Right ventricle myocardium inferior (tissue), 1 donor: ENCODE measurements at regions of chr9 and their contacts with region 1.

Region 1: GRCh38 chr9:27414220-27414761 is 109.8 kb upstream of the IFNK start:
- DNase-seq: peak; percentile 61
- ATAC-seq: peak; percentile 86

Region 2: DNA sequence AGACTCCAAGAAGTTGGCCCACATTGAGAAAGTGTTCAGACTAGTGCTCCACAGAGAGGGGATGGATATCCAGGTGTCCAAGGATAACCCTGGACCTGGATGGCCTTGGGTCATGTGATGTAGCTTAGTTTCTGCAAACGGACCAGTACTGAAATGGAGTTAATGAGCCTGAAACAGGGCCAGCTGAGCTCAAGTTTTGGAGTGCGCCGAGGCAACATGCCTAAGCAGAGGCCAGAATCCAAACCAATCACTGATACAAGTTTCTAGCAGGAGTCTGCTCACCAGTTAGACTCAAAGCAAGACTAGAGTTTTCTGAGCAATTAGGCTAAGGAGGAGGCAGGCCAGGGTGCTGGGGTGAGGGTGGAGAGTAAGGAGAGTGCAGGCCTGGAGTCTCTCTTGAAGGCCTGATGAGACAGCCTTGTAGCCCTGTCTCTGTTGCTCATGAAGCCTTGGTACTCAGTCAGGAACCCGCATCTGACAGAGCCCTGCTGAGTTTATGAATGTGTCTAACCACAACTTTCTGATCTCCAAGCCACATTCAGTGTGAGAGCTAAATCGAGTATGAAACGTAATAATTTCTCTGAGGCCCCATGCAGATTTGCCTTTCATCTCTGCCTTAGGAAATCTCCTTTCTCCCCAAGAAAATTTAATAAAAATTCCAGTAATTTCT is 48.4 kb before region 1 on chr9:
- intact Hi-C with region 1: loop called (anchors 10 kb)
- DNase-seq: no peak
- ATAC-seq: no peak